PC-3 (cell line): ENCODE measurements at regions of chr12 and their contacts with region 1.

Region 1: DNA sequence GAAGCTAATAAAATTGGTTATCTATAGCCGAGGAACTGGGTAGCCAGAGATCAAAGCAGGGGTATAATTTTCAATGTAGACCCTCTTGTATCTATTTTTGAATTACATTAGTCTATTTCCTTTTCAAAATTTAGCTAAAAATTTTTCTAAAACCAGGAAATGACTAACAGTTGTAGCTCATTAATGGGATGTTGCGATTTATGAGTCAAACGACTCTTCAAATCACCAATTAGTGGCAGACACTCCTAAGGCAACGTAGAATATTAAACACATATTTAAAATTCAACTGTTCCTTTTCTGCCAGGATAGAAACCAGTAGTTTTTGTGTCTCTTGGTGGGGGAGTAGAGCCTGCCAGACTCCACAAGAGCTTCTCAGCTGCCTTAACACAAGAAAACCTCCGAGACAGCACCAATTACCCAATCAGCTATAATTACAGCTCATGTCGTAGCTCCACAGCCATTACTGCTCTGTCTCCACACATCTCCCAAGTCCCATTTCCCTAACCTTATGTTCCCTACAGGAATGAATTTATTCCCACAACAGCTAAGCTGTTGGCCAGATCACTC is 26.9 kb downstream of the GCN1 start:
- DNase-seq: no peak
- ATAC-seq: 0 out of 2 replicates have a peak, but pooled peaks have one; percentile 14
- H3K4me3 ChIP-seq: no peak overlapping the region
- H3K27ac ChIP-seq: no peak overlapping the region
- H3K4me1 ChIP-seq: no peaks in the 10 kb centered on the region
- H3K27me3 ChIP-seq: no peaks in the 10 kb centered on the region
- CTCF ChIP-seq: no peak

Region 2: GRCh38 chr12:120125792-120126634 is 41.6 kb before region 1 on chr12:
- CTCF ChIA-PET with region 1: no interaction called
- POLR2A ChIA-PET with region 1: interaction called, 20 read pairs
- intact Hi-C with region 1: no loop called
- DNase-seq: no peak
- ATAC-seq: 0 out of 2 replicates have a peak, but pooled peaks have one; percentile 5
- H3K4me3 ChIP-seq: no peak overlapping the region
- H3K27ac ChIP-seq: no peak overlapping the region
- H3K4me1 ChIP-seq: no peaks in the 10 kb centered on the region
- H3K27me3 ChIP-seq: no peaks in the 10 kb centered on the region
- CTCF ChIP-seq: no peak

Region 3: GRCh38 chr12:120156315-120157259 is 11.0 kb before region 1 on chr12:
- CTCF ChIA-PET with region 1: no interaction called
- POLR2A ChIA-PET with region 1: interaction called, 33 read pairs
- intact Hi-C with region 1: no loop called
- DNase-seq: no peak
- ATAC-seq: no peak
- H3K4me3 ChIP-seq: no peak overlapping the region
- H3K27ac ChIP-seq: no peak overlapping the region
- H3K4me1 ChIP-seq: no peaks in the 10 kb centered on the region
- H3K27me3 ChIP-seq: no peaks in the 10 kb centered on the region
- CTCF ChIP-seq: no peak

Region 4: GRCh38 chr12:120265473-120266179 is 98.0 kb after region 1 on chr12 and contains the start of gene PXN:
- CTCF ChIA-PET with region 1: interaction called, 12 read pairs
- POLR2A ChIA-PET with region 1: interaction called, 16 read pairs
- intact Hi-C with region 1: no loop called
- DNase-seq: peak; percentile 89
- ATAC-seq: peak; percentile 41
- H3K4me3 ChIP-seq: peak within 1 kb of the TSS; percentile 91
- H3K27ac ChIP-seq: peak within 1 kb of the TSS; percentile 91
- H3K4me1 ChIP-seq: peaks cover 28% of the 10 kb centered on the region
- H3K27me3 ChIP-seq: no peaks in the 10 kb centered on the region
- CTCF ChIP-seq: peak; percentile 83
- total RNA-seq, gene PXN: 313 and 413 TPM in 2 replicates

Region 5: GRCh38 chr12:120562906-120563305 is 395.3 kb after region 1 on chr12:
- CTCF ChIA-PET with region 1: no interaction called
- POLR2A ChIA-PET with region 1: no interaction called
- intact Hi-C with region 1: no loop called
- DNase-seq: no peak
- ATAC-seq: no peak
- H3K4me3 ChIP-seq: no peak overlapping the region
- H3K27ac ChIP-seq: no peak overlapping the region
- H3K4me1 ChIP-seq: no peaks in the 10 kb centered on the region
- H3K27me3 ChIP-seq: no peaks in the 10 kb centered on the region
- CTCF ChIP-seq: no peak